ENCODE measurements at regions of chr5 and their contacts with region 1.

Region 1: DNA sequence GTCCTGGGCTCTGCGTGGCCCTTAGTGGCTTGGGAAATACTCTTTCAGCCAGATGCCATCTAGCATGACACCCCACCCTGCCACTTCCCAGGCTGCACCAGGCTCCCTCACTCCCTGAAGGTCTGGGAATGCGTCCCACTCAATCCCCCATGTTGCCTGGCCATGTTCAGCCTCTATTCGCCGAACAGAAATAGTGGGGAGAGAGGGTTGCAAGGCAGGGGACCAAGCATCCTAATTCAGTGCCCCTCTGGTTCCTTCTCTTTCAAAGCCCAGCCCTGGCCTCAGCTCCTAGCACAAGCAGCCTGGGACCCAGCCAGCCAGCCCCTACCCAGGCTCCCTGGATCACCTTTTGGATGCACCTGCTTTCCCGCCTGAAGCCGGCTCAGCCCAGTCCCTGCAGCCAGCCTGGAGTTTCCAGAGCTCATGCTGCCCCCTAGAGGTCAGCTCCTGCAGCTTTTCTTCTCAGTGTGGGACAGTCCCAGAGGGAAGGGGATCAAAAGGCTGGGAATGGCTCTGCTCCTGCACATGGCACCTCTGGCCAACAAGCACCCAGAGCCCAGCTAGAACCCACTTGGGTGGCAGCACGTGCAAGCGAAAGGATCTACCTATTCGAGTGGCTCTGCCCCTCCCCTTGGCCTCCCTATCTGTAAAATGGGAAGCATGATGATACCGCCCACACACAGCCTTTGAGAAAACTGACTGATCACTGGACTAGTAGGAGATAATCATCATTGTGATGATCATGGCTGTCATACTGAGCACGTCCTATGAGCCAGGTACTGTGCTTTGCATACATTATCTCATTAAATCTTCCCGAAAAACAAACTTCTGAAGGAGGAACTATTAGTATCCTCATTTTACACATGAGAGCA is 48.7 kb upstream of the C5orf58 start:
- DNase-seq: peak; percentile 71 to 87 (median 78)
- H3K4me3 ChIP-seq: no peak overlapping the region
- H3K27ac ChIP-seq: no peak overlapping the region
- H3K4me1 ChIP-seq: no peaks in the 10 kb centered on the region
- H3K27me3 ChIP-seq: no peaks in the 10 kb centered on the region
- CTCF ChIP-seq: peak; percentile 69 to 85 (median 76)
- POLR2A ChIP-seq: no peak

Region 2: DNA sequence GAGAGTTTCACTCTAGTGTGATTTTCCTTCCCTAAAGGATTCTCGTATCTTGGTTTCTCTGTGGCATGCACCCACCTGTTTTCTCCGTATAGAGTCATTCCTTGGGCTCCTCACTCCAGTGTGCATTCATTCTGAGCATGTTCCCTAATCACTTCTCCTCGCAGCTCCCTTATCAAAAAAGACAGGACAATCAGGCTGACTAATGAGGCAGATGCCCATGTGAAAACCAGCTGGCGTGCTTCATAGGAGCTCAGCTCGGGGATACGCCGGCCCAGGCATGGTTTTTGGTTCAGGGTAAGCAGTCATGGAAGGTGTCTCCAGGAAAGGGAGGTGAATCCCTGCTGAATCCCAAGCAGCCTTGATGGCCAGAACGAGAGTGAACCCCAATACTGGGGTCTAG is 162.5 kb before region 1 on chr5:
- intact Hi-C with region 1: no loop called
- DNase-seq: no peak
- H3K4me3 ChIP-seq: no peak overlapping the region
- H3K27ac ChIP-seq: no peak overlapping the region
- H3K4me1 ChIP-seq: no peaks in the 10 kb centered on the region
- H3K27me3 ChIP-seq: no peaks in the 10 kb centered on the region
- CTCF ChIP-seq: no peak
- POLR2A ChIP-seq: no peak

Region 3: DNA sequence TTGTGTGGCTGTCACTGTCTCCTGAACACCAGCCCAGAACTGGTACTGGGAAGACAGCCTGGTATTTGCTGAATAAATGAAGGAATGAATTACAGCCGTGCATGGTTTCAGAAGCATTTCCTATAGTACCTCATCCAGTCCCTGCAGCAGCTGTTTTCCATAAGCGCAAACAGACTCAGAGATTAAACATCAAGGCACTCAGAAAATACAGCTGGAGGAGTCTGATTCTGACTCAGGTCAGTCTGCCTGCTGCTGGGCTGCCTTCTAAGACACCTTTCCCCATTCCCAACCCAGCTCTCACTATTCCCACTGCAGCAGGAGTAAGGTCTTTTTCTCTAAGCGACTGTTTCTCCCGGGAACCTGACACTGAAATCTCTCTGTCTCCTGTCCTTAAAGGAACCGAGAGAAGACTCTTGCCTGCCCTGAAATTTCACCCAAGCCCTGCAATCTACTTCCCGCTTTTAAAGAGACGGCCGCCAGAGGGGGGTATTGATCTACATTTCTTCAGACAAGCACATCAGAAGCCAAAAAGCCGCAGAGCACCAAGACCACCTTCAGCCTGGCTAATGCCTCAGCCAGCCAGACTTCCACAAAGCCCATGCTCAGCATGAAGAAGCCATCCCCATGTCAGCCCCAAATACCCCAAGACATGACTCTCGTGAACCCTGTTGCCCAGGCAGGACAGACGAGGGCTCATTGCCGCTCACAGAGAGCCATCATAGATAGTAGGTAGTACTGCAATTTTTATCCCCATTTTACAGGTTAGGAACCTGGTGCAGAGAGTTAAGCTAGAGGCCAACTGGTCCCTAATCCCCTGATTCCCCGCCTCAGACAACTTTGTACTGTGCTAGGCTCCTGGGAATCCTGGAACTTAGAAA is 83.7 kb before region 1 on chr5:
- intact Hi-C with region 1: loop called (anchors 2 to 5 kb)
- DNase-seq: peak; percentile 74 to 95 (median 91)
- H3K4me3 ChIP-seq: no peak overlapping the region
- H3K27ac ChIP-seq: no peak overlapping the region
- H3K4me1 ChIP-seq: peaks cover 0 to 5% of the 10 kb centered on the region in 2 donors
- H3K27me3 ChIP-seq: no peaks in the 10 kb centered on the region
- CTCF ChIP-seq: peak; percentile 57 to 90 (median 75)
- POLR2A ChIP-seq: no peak

Region 4: GRCh38 chr5:170120576-170120975 is 63.5 kb before region 1 on chr5:
- intact Hi-C with region 1: no loop called
- DNase-seq: no peak
- H3K4me3 ChIP-seq: no peak overlapping the region
- H3K27ac ChIP-seq: no peak overlapping the region
- H3K4me1 ChIP-seq: no peaks in the 10 kb centered on the region
- H3K27me3 ChIP-seq: no peaks in the 10 kb centered on the region
- CTCF ChIP-seq: no peak
- POLR2A ChIP-seq: no peak